B cell (primary cell): ENCODE measurements at regions of chr14 and their contacts with region 1.

Region 1: GRCh38 chr14:55129428-55130195 is 560 bp downstream of the LGALS3 start:
- DNase-seq: peak; percentile 73
- ATAC-seq: peak; percentile 67
- H3K4me3 ChIP-seq: peak overlapping the region; percentile 36 to 73 (median 58)
- H3K4me3 Mint-ChIP-seq: peak overlapping the region; percentile 89
- H3K27ac ChIP-seq: no peak overlapping the region
- H3K27ac Mint-ChIP-seq: peak overlapping the region; percentile 59
- H3K4me1 ChIP-seq: peaks cover 7 to 14% of the 10 kb centered on the region in 2 donors
- H3K4me1 Mint-ChIP-seq: peaks cover 15% of the 10 kb centered on the region
- H3K27me3 ChIP-seq: peaks cover 0 to 16% (median 3%) of the 10 kb centered on the region in 4 experiments
- H3K27me3 Mint-ChIP-seq: peaks cover 3% of the 10 kb centered on the region
- CTCF ChIP-seq: no peak

Region 2: GRCh38 chr14:54410215-54410614 is 719.4 kb before region 1 on chr14:
- CTCF ChIA-PET with region 1: no interaction called
- POLR2A ChIA-PET with region 1: no interaction called
- intact Hi-C with region 1: no loop called
- DNase-seq: no peak
- ATAC-seq: no peak
- H3K4me3 ChIP-seq: no peak overlapping the region
- H3K4me3 Mint-ChIP-seq: no peak overlapping the region
- H3K27ac ChIP-seq: no peak overlapping the region
- H3K27ac Mint-ChIP-seq: no peak overlapping the region
- H3K4me1 ChIP-seq: no peaks in the 10 kb centered on the region
- H3K4me1 Mint-ChIP-seq: no peaks in the 10 kb centered on the region
- H3K27me3 ChIP-seq: no peaks in the 10 kb centered on the region
- H3K27me3 Mint-ChIP-seq: no peaks in the 10 kb centered on the region
- CTCF ChIP-seq: no peak

Region 3: DNA sequence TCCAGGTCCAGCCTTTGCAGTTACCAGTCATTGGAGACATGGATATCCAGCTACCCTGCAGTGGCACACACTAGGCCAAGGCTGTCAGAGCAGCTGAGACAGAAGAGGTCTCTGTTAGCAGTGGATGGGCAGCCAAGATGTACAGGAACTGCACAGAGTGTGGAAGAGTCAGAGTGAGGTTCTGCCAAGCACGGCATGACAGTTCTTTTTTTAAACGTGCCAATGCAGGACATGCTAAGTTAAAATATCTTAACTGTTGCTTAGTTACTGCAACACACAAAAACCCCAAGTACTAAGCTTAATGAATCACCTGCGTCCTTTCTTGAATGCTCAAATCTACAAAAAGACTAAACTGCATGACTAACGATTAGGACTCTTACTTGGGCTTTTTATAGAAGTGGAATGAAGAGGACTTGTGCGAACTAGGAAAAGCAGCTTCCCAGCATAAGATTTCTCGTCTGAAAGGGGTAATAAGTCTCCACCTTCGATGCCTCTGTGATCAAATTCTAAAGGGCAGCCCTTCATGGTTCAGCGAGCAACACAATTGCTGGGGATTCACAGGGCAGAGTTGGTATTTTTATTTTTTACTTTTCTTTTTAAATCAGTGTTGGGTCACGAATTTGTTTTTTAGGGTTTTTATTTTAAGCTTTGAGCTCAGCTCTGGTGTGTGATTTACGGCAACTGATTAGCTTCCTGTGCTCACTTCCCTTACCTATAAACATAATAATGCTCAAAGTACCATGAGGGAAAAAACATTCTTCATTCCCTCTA is 57.6 kb before region 1 on chr14:
- CTCF ChIA-PET with region 1: no interaction called
- POLR2A ChIA-PET with region 1: no interaction called
- intact Hi-C with region 1: loop called (anchors 5 kb)
- DNase-seq: peak; percentile 86
- ATAC-seq: peak; percentile 75
- H3K4me3 ChIP-seq: peak overlapping the region in 4 of 5 experiments; percentile 4 to 48 (median 31)
- H3K4me3 Mint-ChIP-seq: peak overlapping the region; percentile 81
- H3K27ac ChIP-seq: peak overlapping the region; percentile 84 to 93
- H3K27ac Mint-ChIP-seq: peak overlapping the region; percentile 96
- H3K4me1 ChIP-seq: peaks cover 34 to 52% of the 10 kb centered on the region in 2 donors
- H3K4me1 Mint-ChIP-seq: peaks cover 66% of the 10 kb centered on the region
- H3K27me3 ChIP-seq: no peaks in the 10 kb centered on the region
- H3K27me3 Mint-ChIP-seq: no peaks in the 10 kb centered on the region
- CTCF ChIP-seq: no peak

Region 4: DNA sequence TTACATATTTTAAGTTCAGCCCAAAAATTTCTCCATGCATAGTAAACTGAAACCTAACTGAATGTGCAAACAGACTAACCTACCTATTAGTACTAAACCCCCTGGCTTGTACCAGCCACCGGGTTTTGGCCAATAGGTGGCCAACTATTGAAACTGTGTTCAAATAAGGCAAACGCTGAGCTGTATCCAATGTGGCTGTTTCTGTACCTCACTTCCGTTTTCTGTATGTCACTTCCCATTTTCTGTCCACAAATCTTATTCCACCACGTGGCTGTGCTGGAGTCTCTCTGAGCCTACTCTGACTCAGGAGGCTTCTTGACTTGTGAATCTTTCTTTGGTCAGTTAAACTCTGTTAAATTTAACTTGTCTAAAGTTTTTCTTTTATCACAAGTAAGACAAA is 135.6 kb after region 1 on chr14:
- CTCF ChIA-PET with region 1: no interaction called
- POLR2A ChIA-PET with region 1: no interaction called
- intact Hi-C with region 1: no loop called
- DNase-seq: peak; percentile 60
- ATAC-seq: peak; percentile 39
- H3K4me3 ChIP-seq: no peak overlapping the region
- H3K4me3 Mint-ChIP-seq: no peak overlapping the region
- H3K27ac ChIP-seq: no peak overlapping the region
- H3K27ac Mint-ChIP-seq: no peak overlapping the region
- H3K4me1 ChIP-seq: no peaks in the 10 kb centered on the region
- H3K4me1 Mint-ChIP-seq: peaks cover 3% of the 10 kb centered on the region
- H3K27me3 ChIP-seq: no peaks in the 10 kb centered on the region
- H3K27me3 Mint-ChIP-seq: peaks cover 8% of the 10 kb centered on the region
- CTCF ChIP-seq: no peak

Region 5: GRCh38 chr14:55389330-55389729 is 259.7 kb after region 1 on chr14:
- CTCF ChIA-PET with region 1: no interaction called
- POLR2A ChIA-PET with region 1: no interaction called
- intact Hi-C with region 1: no loop called
- DNase-seq: no peak
- ATAC-seq: no peak
- H3K4me3 ChIP-seq: no peak overlapping the region
- H3K4me3 Mint-ChIP-seq: no peak overlapping the region
- H3K27ac ChIP-seq: no peak overlapping the region
- H3K27ac Mint-ChIP-seq: no peak overlapping the region
- H3K4me1 ChIP-seq: no peaks in the 10 kb centered on the region
- H3K4me1 Mint-ChIP-seq: no peaks in the 10 kb centered on the region
- H3K27me3 ChIP-seq: no peaks in the 10 kb centered on the region
- H3K27me3 Mint-ChIP-seq: no peaks in the 10 kb centered on the region
- CTCF ChIP-seq: no peak